ENCODE measurements at regions of chr14 and their contacts with region 1.

Region 1: GRCh38 chr14:102096214-102097114 is 9.6 kb upstream of the HSP90AA1 start:
- DNase-seq: peak; percentile 67 to 81
- ATAC-seq: peak; percentile 50 to 83 (median 82)
- H3K4me3 ChIP-seq: no peak overlapping the region
- H3K4me3 Mint-ChIP-seq: no peak overlapping the region
- H3K27ac ChIP-seq: no peak overlapping the region
- H3K27ac Mint-ChIP-seq: no peak overlapping the region
- H3K4me1 ChIP-seq: peaks cover 3% of the 10 kb centered on the region
- H3K4me1 Mint-ChIP-seq: peaks cover 5 to 6% of the 10 kb centered on the region in 2 donors
- H3K27me3 ChIP-seq: no peaks in the 10 kb centered on the region
- H3K27me3 Mint-ChIP-seq: peaks cover 4 to 6% of the 10 kb centered on the region in 2 donors
- CTCF ChIP-seq: peak; percentile 89

Region 2: DNA sequence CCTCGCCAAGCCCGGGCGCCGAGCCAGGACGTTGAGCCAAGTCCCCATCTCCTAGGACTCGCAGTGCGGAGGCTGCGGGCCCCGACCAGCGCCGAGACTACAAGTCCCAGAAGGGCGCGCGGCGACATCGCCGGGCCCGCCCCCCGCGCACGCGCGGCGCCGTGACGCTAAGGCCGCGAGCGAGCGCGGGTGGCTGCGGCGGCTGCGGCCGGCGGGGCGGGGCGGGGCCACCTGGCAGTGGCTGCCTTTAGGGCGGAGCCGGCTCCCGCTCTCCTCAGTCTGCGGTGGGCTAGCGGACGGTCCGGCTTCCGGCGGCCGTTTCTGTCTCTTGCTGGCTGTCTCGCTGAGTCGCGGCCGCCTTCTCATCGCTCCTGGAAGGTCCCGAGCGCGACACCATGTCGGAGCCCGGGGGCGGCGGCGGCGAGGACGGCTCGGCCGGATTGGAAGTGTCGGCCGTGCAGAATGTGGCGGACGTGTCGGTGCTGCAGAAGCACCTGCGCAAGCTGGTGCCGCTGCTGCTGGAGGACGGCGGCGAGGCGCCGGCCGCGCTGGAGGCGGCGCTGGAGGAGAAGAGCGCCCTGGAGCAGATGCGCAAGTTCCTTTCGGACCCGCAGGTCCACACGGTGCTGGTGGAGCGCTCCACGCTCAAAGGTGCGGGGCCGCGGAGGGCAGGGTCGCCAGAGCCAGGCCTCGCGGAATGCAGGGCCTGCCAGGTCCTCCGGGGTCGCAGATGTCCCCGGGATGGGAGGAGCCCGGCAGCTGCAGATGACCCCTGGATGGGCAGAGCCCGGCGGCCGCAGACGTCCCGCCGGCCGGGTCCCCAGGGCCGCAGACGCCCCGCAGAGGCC is 131.9 kb before region 1 on chr14 and contains the start of gene DYNC1H1:
- intact Hi-C with region 1: loop called (anchors 1 kb)
- DNase-seq: peak; percentile 91 to 95
- ATAC-seq: peak; percentile 85 to 93 (median 89)
- H3K4me3 ChIP-seq: peak within 1 kb of the TSS; percentile 73
- H3K4me3 Mint-ChIP-seq: peak within 1 kb of the TSS; percentile 95
- H3K27ac ChIP-seq: peak within 1 kb of the TSS; percentile 84
- H3K27ac Mint-ChIP-seq: peak within 1 kb of the TSS; percentile 90 to 91
- H3K4me1 ChIP-seq: peaks cover 22% of the 10 kb centered on the region
- H3K4me1 Mint-ChIP-seq: peaks cover 35 to 45% of the 10 kb centered on the region in 2 donors
- H3K27me3 ChIP-seq: no peaks in the 10 kb centered on the region
- H3K27me3 Mint-ChIP-seq: peaks cover 0 to 2% of the 10 kb centered on the region in 2 donors
- CTCF ChIP-seq: no peak
- total RNA-seq, gene DYNC1H1: 313 to 381 (median 349) TPM

Region 3: GRCh38 chr14:102063091-102063802 is 33.2 kb before region 1 on chr14:
- intact Hi-C with region 1: loop called (anchors 1 kb)
- DNase-seq: peak; percentile 59 to 84
- ATAC-seq: peak; percentile 89 to 99 (median 98)
- H3K4me3 ChIP-seq: no peak overlapping the region
- H3K4me3 Mint-ChIP-seq: no peak overlapping the region
- H3K27ac ChIP-seq: no peak overlapping the region
- H3K27ac Mint-ChIP-seq: no peak overlapping the region
- H3K4me1 ChIP-seq: peaks cover 23% of the 10 kb centered on the region
- H3K4me1 Mint-ChIP-seq: peaks cover 1 to 6% of the 10 kb centered on the region in 2 donors
- H3K27me3 ChIP-seq: no peaks in the 10 kb centered on the region
- H3K27me3 Mint-ChIP-seq: no peaks in the 10 kb centered on the region
- CTCF ChIP-seq: peak; percentile 29